Heart left ventricle (tissue), 16 donors: ENCODE measurements at regions of chr18 and their contacts with region 1.

Region 1: DNA sequence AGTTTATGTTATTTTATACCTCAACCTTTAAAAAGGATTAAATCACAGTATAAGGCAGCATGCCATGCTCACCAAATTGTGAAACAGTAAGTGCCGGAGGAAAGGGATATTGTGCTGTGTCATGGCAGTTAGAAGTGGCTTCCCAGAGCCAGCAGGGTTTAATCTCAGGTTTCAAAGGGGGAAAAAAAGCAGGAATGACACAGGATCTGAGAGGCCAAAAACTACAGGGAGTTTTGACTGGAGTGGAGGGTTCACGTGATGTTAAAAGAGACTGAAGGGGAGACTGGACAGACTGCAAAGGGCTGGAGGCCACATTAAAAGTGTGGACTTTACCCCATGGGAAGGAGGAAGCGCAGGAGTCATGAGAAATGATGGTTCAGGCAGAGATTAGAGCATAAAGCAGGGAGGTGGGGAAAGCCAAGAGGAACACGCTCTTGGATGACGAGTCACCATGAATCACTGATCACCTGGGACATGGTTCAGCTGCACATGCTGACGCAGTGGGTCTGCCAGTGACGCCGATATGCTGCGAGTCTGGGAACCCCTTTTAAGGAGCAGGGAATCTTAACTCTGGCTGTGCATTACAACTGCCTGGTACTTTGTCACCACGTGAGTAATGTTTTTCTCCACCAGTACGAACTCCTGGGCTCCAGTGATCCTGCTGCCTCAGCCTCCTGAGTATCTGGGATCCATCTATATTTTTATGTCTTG is 6.1 kb downstream of the CHMP1B start:
- DNase-seq: peak in 4 of 5 donors; percentile 36 to 90 (median 59)
- ATAC-seq: peak; percentile 51 to 95 (median 92)
- H3K4me3 ChIP-seq: peak overlapping the region in 5 of 12 donors; percentile 5 to 17 (median 8)
- H3K27ac ChIP-seq: peak overlapping the region in 11 of 12 donors; percentile 34 to 83 (median 67)
- H3K4me1 ChIP-seq: peaks cover 5 to 65% (median 25%) of the 10 kb centered on the region in 12 donors
- H3K27me3 ChIP-seq: no peaks in the 10 kb centered on the region
- CTCF ChIP-seq: no peak
- POLR2A ChIP-seq: peak in 1 of 2 donors; percentile 16

Region 2: DNA sequence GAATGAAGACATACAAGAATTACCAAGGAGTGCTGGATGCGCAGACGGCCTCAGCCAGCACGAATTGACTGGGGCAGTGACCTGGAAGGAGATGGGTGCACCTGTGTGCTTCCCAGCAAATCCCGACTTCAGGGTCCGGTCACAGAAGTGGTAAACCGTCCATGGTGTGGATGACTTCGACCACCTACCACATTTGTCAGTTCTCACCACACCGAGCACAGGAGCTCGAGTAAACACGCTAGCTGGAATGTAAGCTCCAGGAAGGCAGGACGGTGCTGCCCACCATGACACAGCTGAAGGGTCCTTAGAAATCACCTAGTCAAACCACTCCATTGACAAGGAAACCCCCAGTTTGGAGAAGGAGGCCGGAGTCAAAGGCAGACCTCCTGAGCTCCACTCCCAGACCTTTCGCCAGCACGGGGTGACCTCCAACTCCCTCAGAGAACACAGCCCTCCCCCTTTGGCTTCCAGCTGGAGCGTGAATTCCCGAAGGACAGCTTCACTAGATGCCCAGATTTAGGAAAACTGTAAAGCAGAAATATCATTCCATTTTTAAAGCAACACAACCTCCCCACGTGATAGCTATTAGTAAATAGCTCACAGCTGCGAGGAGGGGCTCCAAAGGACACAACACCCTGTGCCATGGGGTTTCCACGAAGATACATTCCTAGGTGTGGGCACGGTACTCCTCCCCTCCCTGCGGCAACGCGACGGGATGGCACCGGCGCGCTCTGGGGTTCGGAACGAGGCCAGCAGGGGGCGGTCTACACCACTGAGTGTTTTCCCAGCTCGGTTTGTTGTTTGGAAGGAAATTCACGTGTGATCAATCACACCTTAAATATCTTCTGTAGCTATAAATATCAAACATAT is 202.4 kb before region 1 on chr18:
- intact Hi-C with region 1: loop called in 3 of 10 experiments (anchors 10 kb)
- DNase-seq: peak in 3 of 5 donors; percentile 20 to 50 (median 42)
- ATAC-seq: peak in 3 of 4 donors; percentile 70 to 77 (median 72)
- H3K4me3 ChIP-seq: peak overlapping the region in 1 of 12 donors; percentile 5
- H3K27ac ChIP-seq: no peak overlapping the region
- H3K4me1 ChIP-seq: peaks cover 0 to 5% (median 0%) of the 10 kb centered on the region in 12 donors
- H3K27me3 ChIP-seq: peaks cover 0 to 31% (median 0%) of the 10 kb centered on the region in 9 donors
- CTCF ChIP-seq: peak; percentile 55 to 81 (median 70)
- POLR2A ChIP-seq: no peak

Region 3: GRCh38 chr18:12076424-12077140 is 219.2 kb after region 1 on chr18:
- intact Hi-C with region 1: loop called in 1 of 10 experiments (anchors 5 kb)
- DNase-seq: peak in 2 of 5 donors; percentile 28 to 62
- ATAC-seq: peak in 3 of 4 donors; percentile 32 to 85 (median 63)
- H3K4me3 ChIP-seq: peak overlapping the region in 6 of 12 donors; percentile 18 to 48 (median 33)
- H3K27ac ChIP-seq: peak overlapping the region in 6 of 12 donors; percentile 23 to 63 (median 48)
- H3K4me1 ChIP-seq: peaks cover 0 to 8% (median 0%) of the 10 kb centered on the region in 12 donors
- H3K27me3 ChIP-seq: no peaks in the 10 kb centered on the region
- CTCF ChIP-seq: no peak
- POLR2A ChIP-seq: no peak

Region 4: GRCh38 chr18:12086677-12087470 is 229.5 kb after region 1 on chr18:
- intact Hi-C with region 1: no loop called
- DNase-seq: peak in 1 of 5 donors; percentile 63
- ATAC-seq: peak in 3 of 4 donors; percentile 8 to 23 (median 16)
- H3K4me3 ChIP-seq: no peak overlapping the region
- H3K27ac ChIP-seq: no peak overlapping the region
- H3K4me1 ChIP-seq: no peaks in the 10 kb centered on the region
- H3K27me3 ChIP-seq: no peaks in the 10 kb centered on the region
- CTCF ChIP-seq: no peak
- POLR2A ChIP-seq: no peak